Ovary (tissue), 10 donors: ENCODE measurements at regions of chr4 and their contacts with region 1.

Region 1: DNA sequence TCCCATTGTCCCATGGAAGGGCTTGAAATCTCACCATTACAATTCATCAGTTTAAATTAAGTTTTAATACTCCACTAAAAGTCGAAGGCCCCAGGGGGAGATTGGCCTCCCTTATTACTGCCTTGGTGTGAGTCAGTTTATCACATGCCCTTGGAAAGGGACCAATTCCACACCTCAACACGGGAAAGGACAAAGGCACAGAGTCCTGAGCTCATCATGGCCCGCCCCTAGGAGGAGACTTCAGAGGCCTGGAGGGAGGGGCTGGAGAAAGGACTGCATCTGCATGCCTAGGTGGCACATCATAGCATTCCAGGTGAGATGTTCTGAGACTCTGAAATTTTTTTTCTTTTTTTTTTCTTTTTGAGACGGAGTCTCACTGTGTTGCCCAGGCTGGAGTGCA is 2.8 kb upstream of the SEL1L3 start:
- DNase-seq: no peak
- H3K4me3 ChIP-seq: no peak overlapping the region
- H3K27ac ChIP-seq: no peak overlapping the region
- H3K4me1 ChIP-seq: no peaks in the 10 kb centered on the region
- H3K27me3 ChIP-seq: no peaks in the 10 kb centered on the region
- CTCF ChIP-seq: no peak
- EP300 ChIP-seq: no peak
- POLR2A ChIP-seq: no peak

Region 2: GRCh38 chr4:26964512-26964911 is 1098.9 kb after region 1 on chr4:
- intact Hi-C with region 1: loop called in 1 of 4 experiments (anchors 5 kb)
- DNase-seq: no peak
- H3K4me3 ChIP-seq: no peak overlapping the region
- H3K27ac ChIP-seq: no peak overlapping the region
- H3K4me1 ChIP-seq: no peaks in the 10 kb centered on the region
- H3K27me3 ChIP-seq: no peaks in the 10 kb centered on the region
- CTCF ChIP-seq: no peak
- EP300 ChIP-seq: no peak
- POLR2A ChIP-seq: no peak